H1 (cell line): ENCODE measurements at regions of chr2 and their contacts with region 1.

Region 1: DNA sequence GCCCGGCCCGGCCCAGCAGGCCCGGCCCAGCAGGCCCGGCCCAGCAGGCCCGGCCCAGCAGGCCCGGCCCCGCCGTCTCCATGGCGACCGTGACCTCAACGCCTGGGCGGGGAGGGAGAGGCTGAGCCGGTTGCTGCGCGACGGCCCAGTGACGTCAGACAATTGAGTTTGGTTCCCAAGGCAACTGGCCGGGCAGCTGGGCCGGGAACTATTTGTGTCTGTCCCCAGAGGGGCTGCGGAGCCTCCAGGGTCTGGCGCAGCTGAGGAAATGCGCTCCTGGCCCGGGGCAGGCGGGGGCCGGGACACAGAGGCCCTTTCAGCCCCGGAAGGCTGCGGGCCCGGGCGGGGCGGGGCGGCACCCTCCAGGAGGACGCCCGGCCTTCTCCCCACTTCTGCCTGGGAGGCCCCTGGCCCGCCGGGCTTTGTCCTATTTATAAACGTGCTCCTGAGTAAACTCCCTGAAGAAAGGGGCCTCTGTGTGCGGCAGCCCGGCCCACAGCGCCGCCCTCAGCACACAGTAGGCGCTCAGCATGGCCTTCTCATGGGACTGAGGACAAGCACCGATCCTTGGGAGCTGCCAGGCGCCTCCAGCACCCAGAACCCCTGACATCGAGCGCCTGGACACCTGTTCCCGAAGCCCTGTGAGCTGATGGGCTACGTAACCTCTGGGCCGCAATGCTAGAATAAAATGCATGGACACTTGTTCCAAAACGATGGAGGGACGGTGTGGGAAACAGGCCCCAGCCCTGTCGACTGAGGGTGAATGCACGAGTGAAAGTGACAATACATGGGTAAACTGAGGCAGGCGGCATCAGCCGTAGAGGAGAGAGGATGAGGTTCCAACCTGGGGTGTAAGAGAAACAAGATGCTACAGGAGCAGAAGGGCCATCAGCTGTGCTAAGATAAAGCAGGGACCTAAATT is 12.3 kb downstream of the TEX44 start:
- DNase-seq: peak; percentile 93 to 99
- H3K4me3 ChIP-seq: peak overlapping the region; percentile 25 to 56 (median 30); a peak in 7 of 8 replicates
- H3K27ac ChIP-seq: peak overlapping the region; percentile 94
- H3K4me1 ChIP-seq: peaks cover 6 to 29% (median 21%) of the 10 kb centered on the region in 4 experiments
- H3K27me3 ChIP-seq: no peaks in the 10 kb centered on the region
- CTCF ChIP-seq: no peak
- EP300 ChIP-seq: peak in 1 of 2 experiments; percentile 30; a peak in 1 of 3 replicates
- POLR2A ChIP-seq: peak in 1 of 2 experiments; percentile 83; a peak in 1 of 3 replicates
- RAD21 ChIP-seq: peak in 1 of 2 experiments; percentile 18; a peak in 2 of 4 replicates

Region 2: DNA sequence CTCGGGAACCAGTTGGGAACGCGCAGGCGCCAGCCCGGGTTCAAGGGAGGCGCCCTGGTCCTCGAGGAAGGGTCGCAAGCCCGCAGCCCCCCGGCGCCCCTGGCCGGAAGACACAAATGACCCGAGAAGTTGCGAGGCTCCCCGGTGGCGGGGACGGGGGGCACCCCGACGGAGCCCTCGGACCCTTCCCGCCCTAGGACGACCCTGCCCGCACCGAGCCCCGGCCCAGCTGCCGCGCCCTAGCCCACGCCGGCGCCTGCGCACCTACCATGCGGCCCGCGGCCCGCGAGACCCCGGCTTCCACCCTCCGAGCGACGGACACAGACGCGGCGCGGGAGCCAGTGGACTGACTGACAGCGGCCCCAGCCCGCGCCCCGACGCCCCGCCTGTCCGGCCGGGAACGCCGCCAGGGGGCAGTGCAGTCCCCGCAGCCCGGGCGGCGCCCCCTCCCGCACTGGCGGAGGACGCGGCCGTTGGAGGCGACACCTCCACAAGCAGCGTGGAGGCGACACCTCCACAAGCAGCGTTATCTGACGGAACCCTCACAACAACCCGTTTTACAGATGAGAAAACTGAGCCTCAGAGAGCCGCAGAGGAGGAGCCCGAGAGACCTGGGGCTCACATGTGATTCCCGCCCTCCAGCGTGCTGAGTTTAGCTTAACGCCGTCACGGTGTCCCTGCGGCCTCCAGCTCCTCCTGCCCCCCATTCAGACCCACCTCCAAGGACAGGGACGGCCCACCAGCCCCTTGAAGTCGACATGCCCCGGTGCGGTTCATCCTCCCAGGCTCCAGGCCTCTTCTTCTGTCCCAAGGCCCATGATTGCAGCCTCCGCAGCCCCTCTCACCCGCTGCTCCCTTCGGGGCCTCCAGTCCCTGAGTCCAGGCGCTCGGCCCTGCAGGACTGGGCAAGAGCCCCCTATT is 74.6 kb before region 1 on chr2 and contains the start of gene NMUR1:
- CTCF ChIA-PET with region 1: interaction called, 35 read pairs
- POLR2A ChIA-PET with region 1: no interaction called
- DNase-seq: peak in 1 of 2 experiments; percentile 91
- H3K4me3 ChIP-seq: peak within 1 kb of the TSS; percentile 30 to 58 (median 36)
- H3K27ac ChIP-seq: no peak within 1 kb of the TSS
- H3K4me1 ChIP-seq: peaks cover 0 to 7% (median 3%) of the 10 kb centered on the region in 4 experiments; a peak in 2 of 7 replicates
- H3K27me3 ChIP-seq: peaks cover 1 to 18% (median 16%) of the 10 kb centered on the region in 4 experiments
- CTCF ChIP-seq: peak in 2 of 3 experiments; percentile 79 to 98; a peak in 3 of 4 replicates
- EP300 ChIP-seq: no peak
- POLR2A ChIP-seq: no peak
- RAD21 ChIP-seq: peak; percentile 43 to 64; a peak in 3 of 4 replicates
- total RNA-seq, gene NMUR1: 0.46 and 0.56 TPM in 2 replicates

Region 3: DNA sequence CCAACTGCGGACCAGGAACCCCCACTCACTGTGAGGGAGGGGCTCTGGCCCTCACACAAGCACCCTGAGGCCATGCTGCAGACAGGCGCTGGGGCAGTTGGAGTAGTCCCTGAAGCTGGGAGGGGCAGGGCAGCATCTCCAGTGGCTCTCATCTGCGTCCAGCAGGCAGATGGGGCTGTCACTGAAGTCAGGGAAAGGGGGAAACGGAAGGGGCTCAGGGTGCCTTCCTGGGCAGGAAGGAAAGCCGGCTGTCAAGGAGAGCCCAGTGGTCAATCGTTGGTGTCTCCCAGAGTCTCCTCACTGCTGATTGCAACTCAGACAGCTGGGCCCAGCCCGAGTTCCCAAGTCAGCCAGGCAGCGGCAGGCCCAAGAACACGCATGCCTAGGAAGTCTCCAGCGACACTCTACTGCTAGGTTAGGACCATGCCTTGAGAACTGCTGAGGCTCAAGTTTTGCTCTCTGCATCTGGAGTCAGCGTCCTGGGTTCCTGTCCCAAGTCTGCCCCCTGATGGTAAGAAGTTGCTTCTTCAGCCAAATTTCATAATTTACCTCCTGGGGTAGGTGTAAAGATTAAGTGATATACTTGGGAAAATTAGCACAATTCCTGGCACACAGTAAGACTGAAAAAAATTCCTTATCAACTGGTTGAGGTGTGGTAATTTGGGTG is 47.2 kb before region 1 on chr2:
- CTCF ChIA-PET with region 1: interaction called, 368 read pairs
- POLR2A ChIA-PET with region 1: interaction called, 10 read pairs
- DNase-seq: peak; percentile 50 to 60
- H3K4me3 ChIP-seq: no peak overlapping the region
- H3K27ac ChIP-seq: no peak overlapping the region
- H3K4me1 ChIP-seq: no peaks in the 10 kb centered on the region; a peak in 1 of 7 replicates
- H3K27me3 ChIP-seq: no peaks in the 10 kb centered on the region; a peak in 1 of 7 replicates
- CTCF ChIP-seq: peak; percentile 51 to 88 (median 86)
- EP300 ChIP-seq: no peak
- POLR2A ChIP-seq: no peak
- RAD21 ChIP-seq: peak; percentile 75 to 83

Region 4: GRCh38 chr2:231583982-231584381 is 21.0 kb before region 1 on chr2:
- CTCF ChIA-PET with region 1: interaction called, 83 read pairs
- POLR2A ChIA-PET with region 1: interaction called, 5 read pairs
- DNase-seq: peak; percentile 50 to 58
- H3K4me3 ChIP-seq: no peak overlapping the region
- H3K27ac ChIP-seq: no peak overlapping the region
- H3K4me1 ChIP-seq: peaks cover 0 to 15% (median 7%) of the 10 kb centered on the region in 4 experiments; a peak in 5 of 7 replicates
- H3K27me3 ChIP-seq: no peaks in the 10 kb centered on the region
- CTCF ChIP-seq: no peak
- EP300 ChIP-seq: peak in 1 of 2 experiments; percentile 79; a peak in 1 of 3 replicates
- POLR2A ChIP-seq: no peak
- RAD21 ChIP-seq: no peak

Region 5: GRCh38 chr2:231621129-231621879 is 16.4 kb after region 1 on chr2:
- CTCF ChIA-PET with region 1: interaction called, 10 read pairs
- POLR2A ChIA-PET with region 1: interaction called, 6 read pairs
- DNase-seq: peak in 1 of 2 experiments; percentile 77
- H3K4me3 ChIP-seq: peak overlapping the region in 1 of 4 experiments; percentile 30; a peak in 1 of 8 replicates
- H3K27ac ChIP-seq: peak overlapping the region; percentile 87
- H3K4me1 ChIP-seq: peaks cover 9 to 14% (median 12%) of the 10 kb centered on the region in 4 experiments
- H3K27me3 ChIP-seq: no peaks in the 10 kb centered on the region
- CTCF ChIP-seq: no peak
- EP300 ChIP-seq: no peak
- POLR2A ChIP-seq: no peak
- RAD21 ChIP-seq: no peak

Region 6: DNA sequence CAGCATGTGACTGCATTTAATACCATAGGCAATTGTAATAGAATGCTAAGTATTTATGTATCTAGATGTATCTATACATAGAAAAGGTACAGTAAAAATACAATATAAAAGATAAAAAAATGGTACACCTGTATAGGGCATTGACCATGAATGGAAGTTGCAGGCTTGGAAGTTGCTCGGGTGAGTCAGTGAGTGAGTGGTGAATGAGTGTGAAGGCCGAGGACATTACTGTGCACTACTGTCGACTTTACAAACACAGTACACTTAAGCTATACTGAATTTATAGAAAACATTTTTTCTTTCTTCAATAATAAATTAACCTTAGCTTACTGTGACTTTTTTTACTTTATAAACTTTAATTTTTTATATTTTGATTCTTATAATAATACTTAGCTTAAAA is 365.5 kb after region 1 on chr2:
- CTCF ChIA-PET with region 1: no interaction called
- POLR2A ChIA-PET with region 1: no interaction called
- DNase-seq: no peak
- H3K4me3 ChIP-seq: no peak overlapping the region
- H3K27ac ChIP-seq: no peak overlapping the region
- H3K4me1 ChIP-seq: no peaks in the 10 kb centered on the region
- H3K27me3 ChIP-seq: no peaks in the 10 kb centered on the region
- CTCF ChIP-seq: no peak
- EP300 ChIP-seq: no peak
- POLR2A ChIP-seq: no peak
- RAD21 ChIP-seq: no peak